Right ventricle myocardium inferior (tissue), 1 donor: ENCODE measurements at regions of chr2 and their contacts with region 1.

Region 1: DNA sequence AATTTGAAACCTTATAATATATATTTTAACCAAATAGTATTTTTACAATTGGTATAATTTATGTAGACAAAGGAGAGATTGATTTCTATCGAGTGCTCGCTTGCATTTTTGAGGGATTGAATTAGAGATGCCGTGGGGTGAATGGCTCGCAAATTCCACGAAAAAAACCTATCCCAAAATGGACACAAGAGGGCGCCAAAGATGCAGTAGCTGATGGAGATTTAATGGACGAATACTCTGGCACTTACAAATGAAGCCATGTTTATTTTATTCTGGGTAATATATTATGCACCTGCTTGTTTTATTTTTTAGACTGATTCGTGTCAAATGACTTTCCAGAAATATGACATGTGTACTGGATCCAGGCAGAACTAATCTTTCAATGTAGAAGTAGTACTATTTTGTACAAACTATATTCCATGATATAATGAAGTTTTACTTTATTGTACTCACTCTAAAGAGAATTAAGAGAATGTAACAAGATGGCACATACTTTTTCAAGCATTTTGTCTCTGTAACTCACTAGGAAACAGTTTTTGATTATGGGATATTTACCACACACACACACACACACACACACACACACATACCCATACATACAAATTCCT is 505.4 kb downstream of the PLCL1 start:
- DNase-seq: no peak
- ATAC-seq: no peak

Region 2: DNA sequence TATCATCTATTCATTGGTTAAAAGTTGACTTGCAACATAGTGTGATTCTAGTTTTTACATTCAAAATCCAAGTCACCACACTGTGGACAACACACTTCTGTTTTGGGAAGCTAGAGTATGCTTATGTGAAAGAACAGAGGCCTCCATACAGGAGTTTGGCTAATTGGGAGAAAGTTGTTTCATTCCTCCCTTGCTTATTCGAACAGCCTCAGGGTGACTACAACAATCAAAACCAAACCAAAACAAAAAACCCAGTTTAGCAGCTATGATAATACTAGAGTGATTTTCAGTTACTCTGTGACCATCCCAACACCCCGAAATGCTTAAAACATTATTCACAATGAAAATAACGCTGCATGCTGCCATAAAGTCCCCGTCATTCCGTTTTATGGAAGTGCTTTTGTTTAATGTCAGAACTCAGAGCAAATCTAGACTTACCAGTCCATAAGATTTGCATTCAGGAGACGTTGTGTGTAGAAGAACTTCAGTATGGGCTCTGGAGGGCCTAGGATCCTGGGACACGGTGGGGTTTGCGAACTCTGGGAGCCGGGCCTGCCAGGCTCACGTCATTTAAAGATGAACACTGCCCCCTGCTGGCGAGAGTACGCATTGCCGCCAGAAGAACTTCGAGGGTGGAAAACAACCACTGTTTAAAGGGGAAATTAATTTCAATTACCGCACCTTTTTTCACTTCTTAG is 1429.8 kb after region 1 on chr2:
- intact Hi-C with region 1: loop called (anchors 5 kb)
- DNase-seq: peak; percentile 80
- ATAC-seq: no peak